ENCODE measurements at regions of chr7 and their contacts with region 1.

Region 1: GRCh38 chr7:105387621-105388372 is 924 bp downstream of the SRPK2 start:
- DNase-seq: peak; percentile 62 to 64
- ATAC-seq: peak; percentile 73 to 79
- H3K4me3 ChIP-seq: peak overlapping the region; percentile 67 to 94 (median 70)
- H3K27ac ChIP-seq: peak overlapping the region; percentile 24 to 92 (median 66)
- H3K4me1 ChIP-seq: peaks cover 9 to 12% of the 10 kb centered on the region in 2 donors
- H3K27me3 ChIP-seq: no peaks in the 10 kb centered on the region
- CTCF ChIP-seq: peak in 1 of 5 experiments; percentile 5
- POLR2A ChIP-seq: peak; percentile 8 to 29

Region 2: DNA sequence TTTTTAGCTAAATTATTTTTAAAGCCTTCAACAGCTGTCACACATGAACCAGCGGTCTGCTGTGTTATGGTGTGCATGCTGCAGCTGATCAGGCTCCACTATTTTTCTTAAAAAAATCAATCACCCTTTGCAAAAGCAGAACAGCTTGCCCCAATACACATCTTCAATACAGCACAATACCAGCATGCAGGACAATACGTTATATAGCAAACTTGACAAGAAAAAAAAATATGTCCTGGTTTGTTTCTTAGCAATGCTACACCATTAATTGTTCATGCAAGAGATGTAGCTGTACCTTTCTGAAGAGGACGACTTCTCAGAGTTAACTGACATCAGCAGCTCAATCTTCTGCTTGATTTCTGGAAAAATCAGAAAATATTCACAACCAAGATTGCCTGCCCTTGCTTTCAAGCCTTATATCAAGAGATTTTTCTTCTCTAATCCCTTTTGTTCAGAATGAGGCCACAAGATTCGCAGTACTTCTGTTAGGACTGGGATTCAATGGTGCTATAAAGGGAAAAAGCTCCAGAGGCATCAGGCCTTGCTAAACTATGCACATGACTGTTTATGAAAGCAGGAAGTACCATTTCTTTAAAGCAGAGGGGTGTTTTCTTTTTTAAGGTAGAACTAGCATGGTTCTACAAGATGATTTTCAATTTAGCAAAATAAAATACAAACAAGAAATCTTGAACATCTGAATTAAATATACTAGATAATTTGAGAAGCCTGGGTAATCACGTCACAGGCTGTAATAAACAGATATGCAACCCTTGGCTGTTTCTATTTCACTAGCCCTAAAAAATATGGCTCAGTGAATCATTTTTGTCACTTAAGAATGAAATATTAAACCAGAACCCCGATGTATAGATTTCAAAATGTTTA is 119.0 kb before region 1 on chr7:
- in situ Hi-C with region 1: no loop called
- intact Hi-C with region 1: loop called (anchors 2 kb)
- DNase-seq: peak in 1 of 2 donors; percentile 22
- ATAC-seq: peak; percentile 95 to 96
- H3K4me3 ChIP-seq: peak overlapping the region; percentile 44 to 59 (median 56)
- H3K27ac ChIP-seq: peak overlapping the region; percentile 81 to 87 (median 84)
- H3K4me1 ChIP-seq: peaks cover 19 to 40% of the 10 kb centered on the region in 2 donors
- H3K27me3 ChIP-seq: no peaks in the 10 kb centered on the region
- CTCF ChIP-seq: no peak
- POLR2A ChIP-seq: peak; percentile 31 to 72

Region 3: GRCh38 chr7:105336009-105336408 is 51.8 kb before region 1 on chr7:
- in situ Hi-C with region 1: no loop called
- intact Hi-C with region 1: loop called (anchors 5 kb)
- DNase-seq: no peak
- ATAC-seq: no peak
- H3K4me3 ChIP-seq: no peak overlapping the region
- H3K27ac ChIP-seq: no peak overlapping the region
- H3K4me1 ChIP-seq: peaks cover 0 to 10% of the 10 kb centered on the region in 2 donors
- H3K27me3 ChIP-seq: no peaks in the 10 kb centered on the region
- CTCF ChIP-seq: peak in 3 of 5 experiments; percentile 23 to 47 (median 25)
- POLR2A ChIP-seq: no peak

Region 4: GRCh38 chr7:105461518-105461917 is 73.7 kb after region 1 on chr7:
- in situ Hi-C with region 1: no loop called
- intact Hi-C with region 1: no loop called
- DNase-seq: no peak
- ATAC-seq: no peak
- H3K4me3 ChIP-seq: no peak overlapping the region
- H3K27ac ChIP-seq: no peak overlapping the region
- H3K4me1 ChIP-seq: peaks cover 0 to 13% of the 10 kb centered on the region in 2 donors
- H3K27me3 ChIP-seq: no peaks in the 10 kb centered on the region
- CTCF ChIP-seq: no peak
- POLR2A ChIP-seq: no peak

Region 5: GRCh38 chr7:105522062-105522936 is 134.5 kb after region 1 on chr7 and contains the start of gene PUS7:
- in situ Hi-C with region 1: no loop called
- intact Hi-C with region 1: loop called (anchors 5 kb)
- DNase-seq: peak; percentile 72 to 83
- ATAC-seq: peak; percentile 93 to 95
- H3K4me3 ChIP-seq: peak within 1 kb of the TSS; percentile 56 to 87 (median 64)
- H3K27ac ChIP-seq: peak within 1 kb of the TSS; percentile 82 to 96 (median 86)
- H3K4me1 ChIP-seq: peaks cover 12 to 15% of the 10 kb centered on the region in 2 donors
- H3K27me3 ChIP-seq: no peaks in the 10 kb centered on the region
- CTCF ChIP-seq: peak in 2 of 5 experiments; percentile 16 to 26
- POLR2A ChIP-seq: peak; percentile 90 to 91
- total RNA-seq, gene PUS7: 13.4 to 66.2 (median 17.8) TPM

Measured in gastrocnemius medialis (tissue), 4 donors.